Mucosa of descending colon (tissue), 3 donors: ENCODE measurements at regions of chr5 and their contacts with region 1.

Region 1: GRCh38 chr5:135944967-135945560 is 9.7 kb downstream of the LECT2 start:
- DNase-seq: peak in 1 of 3 donors; percentile 84
- ATAC-seq: peak; percentile 59
- H3K4me3 ChIP-seq: no peak overlapping the region
- H3K4me1 ChIP-seq: no peaks in the 10 kb centered on the region
- CTCF ChIP-seq: peak; percentile 50

Region 2: DNA sequence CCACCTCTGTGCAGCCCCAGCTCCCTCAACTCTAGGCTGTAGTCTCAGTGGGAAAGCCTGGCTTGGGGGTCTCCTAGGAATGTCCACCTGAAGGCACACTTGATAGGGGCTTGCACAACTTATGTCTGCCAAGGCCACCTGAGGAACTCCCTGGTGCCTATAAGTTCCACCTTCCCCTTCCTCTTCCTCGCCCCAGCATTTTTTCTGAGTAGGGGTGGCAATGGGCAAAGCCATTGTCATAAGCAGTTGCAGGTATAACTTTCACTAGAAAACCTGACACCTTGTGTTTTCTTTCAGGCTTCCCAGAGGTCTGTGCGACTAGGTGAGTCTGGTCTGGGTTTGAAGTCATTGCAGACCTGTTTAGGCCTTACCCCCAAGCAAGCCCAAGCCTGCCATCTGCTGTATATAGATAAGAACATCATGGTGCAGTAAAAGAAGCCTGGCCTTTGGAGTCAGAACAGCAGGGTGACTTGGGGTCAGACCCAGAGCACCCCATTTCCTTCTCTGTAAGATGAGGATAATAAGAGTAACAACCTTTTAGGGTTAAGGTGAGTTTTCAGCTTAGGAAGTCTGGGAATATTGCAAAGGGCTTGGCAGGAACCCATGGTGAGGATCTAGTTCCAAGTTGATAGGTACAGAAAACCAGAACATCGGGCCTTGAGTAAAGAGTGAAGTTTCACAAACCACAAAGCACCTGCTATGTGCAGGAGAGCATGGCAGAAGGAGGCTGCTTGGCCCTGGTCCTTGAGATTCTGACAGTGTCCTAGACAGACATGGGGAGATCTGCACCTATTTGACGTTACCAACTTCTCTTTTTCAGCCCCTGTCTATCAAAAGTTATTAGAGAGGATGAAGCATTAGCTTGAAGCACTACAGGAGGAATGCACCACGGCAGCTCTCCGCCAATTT is 117.6 kb after region 1 on chr5:
- intact Hi-C with region 1: loop called (anchors 5 to 10 kb)
- DNase-seq: peak in 1 of 3 donors; percentile 48
- ATAC-seq: peak; percentile 61
- H3K4me3 ChIP-seq: no peak overlapping the region
- H3K4me1 ChIP-seq: no peaks in the 10 kb centered on the region
- CTCF ChIP-seq: no peak

Region 3: GRCh38 chr5:136174021-136174659 is 229.1 kb after region 1 on chr5:
- intact Hi-C with region 1: loop called (anchors 5 to 10 kb)
- DNase-seq: no peak
- ATAC-seq: peak; percentile 78
- H3K4me3 ChIP-seq: no peak overlapping the region
- H3K4me1 ChIP-seq: no peaks in the 10 kb centered on the region
- CTCF ChIP-seq: no peak

Region 4: GRCh38 chr5:136212252-136212721 is 267.2 kb after region 1 on chr5:
- intact Hi-C with region 1: loop called in 1 of 2 experiments (anchors 5 kb)
- DNase-seq: peak in 2 of 3 donors; percentile 77 to 82
- ATAC-seq: peak; percentile 77
- H3K4me3 ChIP-seq: no peak overlapping the region
- H3K4me1 ChIP-seq: no peaks in the 10 kb centered on the region
- CTCF ChIP-seq: peak; percentile 86